T-cell (primary cell): ENCODE measurements at regions of chr17 and their contacts with region 1.

Region 1: GRCh38 chr17:38853292-38854219 is at the start of gene RPL23:
- DNase-seq: peak; percentile 74 to 96 (median 89)
- ATAC-seq: peak; percentile 85 to 92 (median 90)
- H3K4me3 ChIP-seq: peak within 1 kb of the TSS; percentile 68 to 90
- H3K4me3 Mint-ChIP-seq: peak within 1 kb of the TSS; percentile 91 to 96 (median 94)
- H3K27ac ChIP-seq: peak within 1 kb of the TSS; percentile 99
- H3K27ac Mint-ChIP-seq: peak within 1 kb of the TSS; percentile 98 to 99
- H3K4me1 ChIP-seq: peaks cover 15 to 34% of the 10 kb centered on the region in 2 experiments
- H3K4me1 Mint-ChIP-seq: peaks cover 41 to 47% (median 45%) of the 10 kb centered on the region in 3 donors
- H3K27me3 ChIP-seq: no peaks in the 10 kb centered on the region
- H3K27me3 Mint-ChIP-seq: no peaks in the 10 kb centered on the region
- total RNA-seq, gene RPL23: 1,638 to 2,124 (median 1,743) TPM

Region 2: GRCh38 chr17:38799378-38800236 is 53.9 kb before region 1 on chr17 and contains the start of gene PIP4K2B:
- CTCF ChIA-PET with region 1: no interaction called
- POLR2A ChIA-PET with region 1: no interaction called
- DNase-seq: peak; percentile 45 to 86 (median 68)
- ATAC-seq: peak; percentile 77 to 80 (median 78)
- H3K4me3 ChIP-seq: peak within 1 kb of the TSS; percentile 92 to 96
- H3K4me3 Mint-ChIP-seq: peak within 1 kb of the TSS; percentile 87 to 95 (median 94)
- H3K27ac ChIP-seq: peak within 1 kb of the TSS; percentile 78
- H3K27ac Mint-ChIP-seq: peak within 1 kb of the TSS; percentile 91 to 94
- H3K4me1 ChIP-seq: peaks cover 17 to 22% of the 10 kb centered on the region in 2 experiments
- H3K4me1 Mint-ChIP-seq: peaks cover 41 to 50% (median 46%) of the 10 kb centered on the region in 3 donors
- H3K27me3 ChIP-seq: no peaks in the 10 kb centered on the region
- H3K27me3 Mint-ChIP-seq: no peaks in the 10 kb centered on the region
- total RNA-seq, gene PIP4K2B: 36.4 to 60.3 (median 52.6) TPM

Region 3: DNA sequence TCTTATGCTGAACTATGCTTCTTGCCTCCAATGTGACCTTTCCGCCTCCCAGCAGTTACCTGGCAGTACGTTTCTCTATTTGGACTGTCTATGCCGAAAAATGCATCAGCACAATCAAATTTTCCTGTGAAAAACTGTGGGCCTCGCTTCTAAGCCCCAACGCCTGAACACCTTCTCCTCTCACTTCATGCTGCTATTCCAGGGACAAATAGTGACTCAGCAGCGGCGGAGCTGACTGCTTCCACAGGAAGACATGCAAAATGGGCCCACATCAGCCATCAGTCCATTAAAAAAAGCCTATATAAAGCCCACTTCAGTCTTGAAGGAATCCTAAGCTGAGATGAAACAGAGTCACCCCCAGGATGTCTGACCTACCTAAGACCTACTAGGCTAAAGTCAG is 43.7 kb before region 1 on chr17:
- CTCF ChIA-PET with region 1: no interaction called
- POLR2A ChIA-PET with region 1: no interaction called
- DNase-seq: no peak
- ATAC-seq: no peak
- H3K4me3 ChIP-seq: no peak overlapping the region
- H3K4me3 Mint-ChIP-seq: no peak overlapping the region
- H3K27ac ChIP-seq: no peak overlapping the region
- H3K27ac Mint-ChIP-seq: no peak overlapping the region
- H3K4me1 ChIP-seq: no peaks in the 10 kb centered on the region
- H3K4me1 Mint-ChIP-seq: no peaks in the 10 kb centered on the region
- H3K27me3 ChIP-seq: peaks cover 0 to 4% of the 10 kb centered on the region in 2 experiments
- H3K27me3 Mint-ChIP-seq: no peaks in the 10 kb centered on the region

Region 4: DNA sequence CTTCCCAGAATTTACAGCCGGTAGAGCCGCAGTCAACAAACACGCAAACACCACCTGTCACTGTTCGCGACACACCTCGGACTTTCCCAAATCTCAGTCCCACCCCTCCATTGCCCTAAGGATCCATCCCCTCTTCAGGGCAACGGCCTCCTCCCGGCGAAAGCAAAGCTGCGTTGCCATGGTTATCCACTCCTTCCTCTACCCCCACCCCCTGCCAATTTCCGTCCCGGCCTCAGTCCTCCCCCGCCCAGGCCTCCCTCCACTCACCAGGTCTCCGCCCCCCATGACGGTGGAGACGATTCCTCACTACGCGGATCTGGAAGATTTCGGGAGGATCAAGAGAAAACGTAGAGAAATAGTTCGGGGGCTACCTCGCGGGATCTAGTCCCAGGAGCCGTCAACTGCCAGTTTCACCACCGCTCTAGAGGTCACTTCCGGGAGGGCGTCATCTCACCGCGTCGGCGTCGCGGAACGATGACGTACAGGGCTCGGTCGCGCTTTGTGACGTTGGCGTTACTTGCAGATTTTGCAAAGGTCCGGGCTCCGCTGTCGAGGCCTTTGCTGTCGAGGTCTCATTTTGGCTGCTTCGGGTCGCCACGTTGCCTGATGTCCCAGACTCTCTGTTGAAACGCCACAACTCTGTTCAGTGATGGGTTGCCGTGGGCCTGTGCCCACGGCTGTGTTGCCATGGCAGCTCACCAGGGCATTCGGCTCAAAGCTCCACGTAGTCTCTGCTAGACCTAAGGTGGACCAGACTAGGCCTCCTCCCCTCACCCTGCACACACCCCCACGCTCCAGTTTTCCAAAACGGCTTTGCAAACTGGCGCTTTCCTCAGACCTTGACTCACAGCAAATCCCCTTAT is 28.4 kb before region 1 on chr17 and contains the start of gene CWC25:
- CTCF ChIA-PET with region 1: interaction called in 1 of 2 experiments, 6 read pairs
- POLR2A ChIA-PET with region 1: interaction called, 6 to 20 read pairs
- DNase-seq: peak; percentile 81 to 99 (median 92)
- ATAC-seq: peak; percentile 79 to 87 (median 84)
- H3K4me3 ChIP-seq: peak within 1 kb of the TSS; percentile 67 to 78
- H3K4me3 Mint-ChIP-seq: peak within 1 kb of the TSS; percentile 92 to 97 (median 97)
- H3K27ac ChIP-seq: peak within 1 kb of the TSS; percentile 96
- H3K27ac Mint-ChIP-seq: peak within 1 kb of the TSS; percentile 98 to 99
- H3K4me1 ChIP-seq: peaks cover 6 to 25% of the 10 kb centered on the region in 2 experiments
- H3K4me1 Mint-ChIP-seq: peaks cover 29 to 36% (median 34%) of the 10 kb centered on the region in 3 donors
- H3K27me3 ChIP-seq: no peaks in the 10 kb centered on the region
- H3K27me3 Mint-ChIP-seq: no peaks in the 10 kb centered on the region
- total RNA-seq, gene CWC25: 31.5 to 45.8 (median 44.3) TPM

Region 5: DNA sequence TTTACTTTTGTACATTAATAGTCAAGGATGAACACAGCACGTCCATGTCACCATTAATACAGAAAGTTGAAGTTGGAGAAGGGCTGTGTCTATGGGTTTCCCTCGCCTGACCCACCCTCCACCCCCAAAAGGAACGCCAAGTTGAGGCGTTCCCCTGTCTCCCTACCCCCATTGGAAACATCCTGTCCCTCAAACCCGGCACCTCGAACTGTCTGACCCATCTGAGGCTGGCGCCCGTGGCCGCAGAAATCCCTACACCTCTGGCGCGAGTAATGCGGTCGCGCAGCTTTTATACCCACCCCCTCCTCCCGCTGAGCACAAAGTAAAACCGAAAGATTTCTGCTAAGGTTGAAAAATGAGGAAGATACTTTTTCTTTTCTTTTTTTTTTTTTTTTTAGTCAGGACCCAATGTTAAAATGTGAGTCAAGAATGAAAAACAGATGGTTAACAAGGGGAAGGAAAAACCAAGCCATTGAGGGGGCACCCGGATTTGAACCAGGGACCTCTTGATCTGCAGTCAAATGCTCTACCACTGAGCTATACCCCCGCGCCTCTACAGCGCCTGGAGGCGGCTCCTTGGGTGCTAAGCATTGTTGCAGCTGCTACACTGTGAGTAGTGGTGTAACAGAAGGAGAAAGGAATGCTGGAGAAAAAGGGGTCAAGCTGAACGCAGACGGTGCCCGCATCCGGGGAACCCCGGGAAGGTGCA is 15.4 kb after region 1 on chr17:
- CTCF ChIA-PET with region 1: interaction called in 1 of 2 experiments, 35 read pairs
- POLR2A ChIA-PET with region 1: interaction called, 5 to 26 read pairs
- DNase-seq: peak; percentile 77 to 92 (median 88)
- ATAC-seq: peak; percentile 55 to 67 (median 55)
- H3K4me3 ChIP-seq: peak overlapping the region; percentile 95 to 100
- H3K4me3 Mint-ChIP-seq: peak overlapping the region; percentile 93 to 99 (median 98)
- H3K27ac ChIP-seq: peak overlapping the region; percentile 83
- H3K27ac Mint-ChIP-seq: peak overlapping the region; percentile 95 to 96
- H3K4me1 ChIP-seq: peaks cover 31 to 54% of the 10 kb centered on the region in 2 experiments
- H3K4me1 Mint-ChIP-seq: peaks cover 42 to 56% (median 48%) of the 10 kb centered on the region in 3 donors
- H3K27me3 ChIP-seq: no peaks in the 10 kb centered on the region
- H3K27me3 Mint-ChIP-seq: peaks cover 0 to 1% of the 10 kb centered on the region in 2 donors